ENCODE measurements at regions of chr4 and their contacts with region 1.

Region 1: GRCh38 chr4:147846318-147847155 is 114.6 kb downstream of the ARHGAP10 start:
- DNase-seq: peak; percentile 40 to 69
- ATAC-seq: peak; percentile 69 to 90 (median 80)
- H3K4me3 ChIP-seq: no peak overlapping the region
- H3K4me3 Mint-ChIP-seq: no peak overlapping the region
- H3K27ac ChIP-seq: no peak overlapping the region
- H3K27ac Mint-ChIP-seq: no peak overlapping the region
- H3K4me1 ChIP-seq: peaks cover 6% of the 10 kb centered on the region
- H3K4me1 Mint-ChIP-seq: peaks cover 0 to 5% of the 10 kb centered on the region in 2 donors
- H3K27me3 ChIP-seq: no peaks in the 10 kb centered on the region
- H3K27me3 Mint-ChIP-seq: no peaks in the 10 kb centered on the region
- CTCF ChIP-seq: no peak

Region 2: GRCh38 chr4:147207911-147208310 is 638.6 kb before region 1 on chr4:
- intact Hi-C with region 1: no loop called
- DNase-seq: no peak
- ATAC-seq: no peak
- H3K4me3 ChIP-seq: no peak overlapping the region
- H3K4me3 Mint-ChIP-seq: no peak overlapping the region
- H3K27ac ChIP-seq: no peak overlapping the region
- H3K27ac Mint-ChIP-seq: no peak overlapping the region
- H3K4me1 ChIP-seq: no peaks in the 10 kb centered on the region
- H3K4me1 Mint-ChIP-seq: no peaks in the 10 kb centered on the region
- H3K27me3 ChIP-seq: no peaks in the 10 kb centered on the region
- H3K27me3 Mint-ChIP-seq: no peaks in the 10 kb centered on the region
- CTCF ChIP-seq: no peak

Region 3: DNA sequence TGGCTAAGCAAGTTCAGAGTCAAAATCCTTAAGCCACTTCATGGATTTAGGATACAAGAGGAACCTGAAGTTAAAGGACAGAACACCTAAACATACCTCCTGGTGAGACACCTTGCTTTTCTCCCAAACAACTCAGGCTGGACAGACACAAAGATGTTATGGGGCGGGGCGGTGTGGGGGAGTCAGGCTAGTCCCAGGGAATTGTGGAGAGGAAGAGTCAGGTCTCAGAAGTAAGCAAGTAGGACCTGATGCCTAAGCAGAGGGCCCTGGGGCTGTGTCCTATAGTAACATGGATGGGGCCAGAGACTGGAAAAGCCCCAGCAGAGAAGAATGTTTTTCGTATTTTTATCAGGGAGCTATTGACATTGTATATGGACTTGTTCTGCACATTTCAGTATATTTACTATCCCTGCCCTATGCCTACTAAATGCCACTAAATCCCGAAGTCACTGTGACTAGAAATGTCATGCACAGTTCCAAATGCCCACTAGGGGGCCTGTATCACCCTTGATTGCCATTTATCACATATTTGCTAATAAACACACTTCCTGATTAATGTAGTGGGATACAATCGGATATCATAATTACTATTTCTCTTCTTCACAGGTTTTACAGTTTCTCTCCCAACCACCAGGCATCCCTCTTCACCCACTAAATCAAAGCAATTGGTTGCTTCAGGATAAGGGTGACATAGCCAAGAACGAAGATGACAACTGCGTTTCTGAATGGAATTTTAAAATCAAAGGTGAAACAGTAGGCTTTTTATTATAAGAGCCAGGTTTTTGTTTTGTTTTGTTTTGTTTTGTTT is 138.5 kb before region 1 on chr4:
- intact Hi-C with region 1: no loop called
- DNase-seq: peak; percentile 27 to 79
- ATAC-seq: peak; percentile 65 to 86 (median 80)
- H3K4me3 ChIP-seq: no peak overlapping the region
- H3K4me3 Mint-ChIP-seq: no peak overlapping the region
- H3K27ac ChIP-seq: no peak overlapping the region
- H3K27ac Mint-ChIP-seq: no peak overlapping the region
- H3K4me1 ChIP-seq: no peaks in the 10 kb centered on the region
- H3K4me1 Mint-ChIP-seq: peaks cover 8 to 9% of the 10 kb centered on the region in 2 donors
- H3K27me3 ChIP-seq: no peaks in the 10 kb centered on the region
- H3K27me3 Mint-ChIP-seq: peaks cover 0 to 3% of the 10 kb centered on the region in 2 donors
- CTCF ChIP-seq: peak; percentile 92

Region 4: DNA sequence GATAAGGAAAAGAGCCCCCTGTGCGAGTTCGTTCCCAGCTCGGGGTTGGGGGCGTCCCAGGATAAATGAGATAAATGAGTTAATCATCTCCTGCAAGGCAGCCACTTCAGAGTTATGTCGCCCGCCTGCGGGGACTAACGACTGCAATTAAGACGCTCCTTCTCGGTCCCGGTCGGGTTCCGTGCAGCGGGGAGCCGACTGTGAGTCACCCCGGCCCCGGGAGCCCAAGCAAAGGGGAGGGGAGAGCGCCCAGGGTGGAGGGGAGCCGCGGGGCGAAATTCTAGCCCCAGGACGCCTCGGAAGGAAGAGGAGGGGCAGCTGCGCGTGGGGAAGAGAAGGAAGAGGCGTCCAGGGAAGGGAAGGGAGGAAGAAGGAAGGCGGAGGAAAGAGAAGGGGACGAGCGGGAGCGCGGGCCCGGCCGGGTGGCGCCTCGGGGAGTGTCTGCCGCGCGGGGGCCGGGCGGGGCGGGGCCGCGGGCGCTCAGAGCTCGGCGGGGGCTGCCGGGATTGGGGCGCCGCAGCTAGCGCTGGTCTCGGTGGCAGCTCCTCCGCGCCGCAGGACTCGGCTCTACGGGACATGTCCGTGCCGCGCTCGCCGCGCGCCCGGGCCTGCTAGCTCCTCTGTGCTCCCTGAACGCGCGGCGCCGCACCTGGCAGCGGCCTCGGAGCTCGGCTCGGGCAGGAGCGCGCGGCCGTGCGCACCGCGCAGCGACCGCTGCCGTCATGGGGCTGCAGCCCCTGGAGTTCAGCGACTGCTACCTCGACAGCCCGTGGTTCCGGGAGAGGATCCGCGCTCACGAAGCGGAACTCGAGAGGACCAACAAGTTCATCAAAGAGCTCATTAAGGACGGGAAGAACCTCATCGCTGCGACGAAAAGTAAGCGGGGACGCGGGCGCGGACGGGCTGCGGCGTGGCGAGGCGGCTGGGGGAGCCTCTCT is 114.7 kb before region 1 on chr4 and contains the start of gene ARHGAP10:
- intact Hi-C with region 1: loop called (anchors 5 kb)
- DNase-seq: peak; percentile 55 to 76
- ATAC-seq: peak; percentile 77 to 79 (median 79)
- H3K4me3 ChIP-seq: peak within 1 kb of the TSS; percentile 96
- H3K4me3 Mint-ChIP-seq: peak within 1 kb of the TSS; percentile 94
- H3K27ac ChIP-seq: peak within 1 kb of the TSS; percentile 68
- H3K27ac Mint-ChIP-seq: peak within 1 kb of the TSS; percentile 77 to 94
- H3K4me1 ChIP-seq: peaks cover 26% of the 10 kb centered on the region
- H3K4me1 Mint-ChIP-seq: peaks cover 48 to 50% of the 10 kb centered on the region in 2 donors
- H3K27me3 ChIP-seq: no peaks in the 10 kb centered on the region
- H3K27me3 Mint-ChIP-seq: no peaks in the 10 kb centered on the region
- CTCF ChIP-seq: no peak
- total RNA-seq, gene ARHGAP10: 13.9 to 28.7 (median 23.2) TPM

Region 5: GRCh38 chr4:147793569-147794313 is 52.8 kb before region 1 on chr4:
- intact Hi-C with region 1: loop called (anchors 2 kb)
- DNase-seq: peak in 1 of 2 donors; percentile 22
- ATAC-seq: peak; percentile 48 to 76 (median 58)
- H3K4me3 ChIP-seq: no peak overlapping the region
- H3K4me3 Mint-ChIP-seq: peak overlapping the region; percentile 70
- H3K27ac ChIP-seq: no peak overlapping the region
- H3K27ac Mint-ChIP-seq: peak overlapping the region; percentile 2 to 44
- H3K4me1 ChIP-seq: peaks cover 15% of the 10 kb centered on the region
- H3K4me1 Mint-ChIP-seq: peaks cover 45 to 48% of the 10 kb centered on the region in 2 donors
- H3K27me3 ChIP-seq: no peaks in the 10 kb centered on the region
- H3K27me3 Mint-ChIP-seq: peaks cover 4 to 7% of the 10 kb centered on the region in 2 donors
- CTCF ChIP-seq: no peak

Region 6: GRCh38 chr4:147799986-147800555 is 46.5 kb before region 1 on chr4:
- intact Hi-C with region 1: loop called (anchors 1 kb)
- DNase-seq: peak; percentile 54 to 89
- ATAC-seq: peak; percentile 93 to 97 (median 94)
- H3K4me3 ChIP-seq: no peak overlapping the region
- H3K4me3 Mint-ChIP-seq: peak overlapping the region; percentile 81
- H3K27ac ChIP-seq: peak overlapping the region; percentile 51
- H3K27ac Mint-ChIP-seq: peak overlapping the region; percentile 84 to 92
- H3K4me1 ChIP-seq: peaks cover 22% of the 10 kb centered on the region
- H3K4me1 Mint-ChIP-seq: peaks cover 52 to 55% of the 10 kb centered on the region in 2 donors
- H3K27me3 ChIP-seq: no peaks in the 10 kb centered on the region
- H3K27me3 Mint-ChIP-seq: peaks cover 17 to 27% of the 10 kb centered on the region in 2 donors
- CTCF ChIP-seq: no peak

Region 7: GRCh38 chr4:147831551-147832177 is 14.9 kb before region 1 on chr4:
- intact Hi-C with region 1: loop called (anchors 2 kb)
- DNase-seq: peak in 1 of 2 donors; percentile 8
- ATAC-seq: peak in 2 of 3 donors; percentile 13 to 27
- H3K4me3 ChIP-seq: no peak overlapping the region
- H3K4me3 Mint-ChIP-seq: peak overlapping the region; percentile 29
- H3K27ac ChIP-seq: peak overlapping the region; percentile 13
- H3K27ac Mint-ChIP-seq: peak overlapping the region; percentile 47 to 71
- H3K4me1 ChIP-seq: peaks cover 26% of the 10 kb centered on the region
- H3K4me1 Mint-ChIP-seq: peaks cover 72 to 81% of the 10 kb centered on the region in 2 donors
- H3K27me3 ChIP-seq: no peaks in the 10 kb centered on the region
- H3K27me3 Mint-ChIP-seq: no peaks in the 10 kb centered on the region
- CTCF ChIP-seq: no peak

Region 8: DNA sequence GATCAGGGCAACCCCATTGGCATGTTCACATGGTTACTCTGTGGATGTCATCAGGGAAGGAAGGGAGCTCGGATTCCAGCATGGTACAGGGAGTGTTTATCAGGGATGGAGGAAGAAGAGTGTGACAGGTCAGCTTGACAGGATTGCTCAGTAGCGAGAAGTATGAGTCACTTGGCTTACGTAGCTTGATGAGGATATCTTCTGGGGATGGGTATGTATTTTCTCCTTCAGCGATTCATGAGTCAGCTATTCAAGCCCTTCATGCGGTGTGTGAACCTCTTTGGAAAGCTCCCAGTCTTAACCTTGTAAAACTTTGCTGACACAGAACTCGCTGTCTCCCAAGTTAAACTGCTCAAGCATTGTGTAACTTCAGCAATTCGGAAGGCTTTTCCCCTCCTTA is 160.8 kb after region 1 on chr4:
- intact Hi-C with region 1: no loop called
- DNase-seq: no peak
- ATAC-seq: no peak
- H3K4me3 ChIP-seq: no peak overlapping the region
- H3K4me3 Mint-ChIP-seq: no peak overlapping the region
- H3K27ac ChIP-seq: no peak overlapping the region
- H3K27ac Mint-ChIP-seq: peak overlapping the region in 1 of 2 donors; percentile 25
- H3K4me1 ChIP-seq: peaks cover 9% of the 10 kb centered on the region
- H3K4me1 Mint-ChIP-seq: peaks cover 40 to 47% of the 10 kb centered on the region in 2 donors
- H3K27me3 ChIP-seq: no peaks in the 10 kb centered on the region
- H3K27me3 Mint-ChIP-seq: no peaks in the 10 kb centered on the region
- CTCF ChIP-seq: no peak